HepG2 (cell line): ENCODE measurements at regions of chr5 and their contacts with region 1.

Region 1: GRCh38 chr5:102971697-102972293 is 148.1 kb downstream of the GIN1 start:
- DNase-seq: peak; percentile 1
- ATAC-seq: peak; percentile 65
- H3K4me3 ChIP-seq: no peak overlapping the region
- H3K27ac ChIP-seq: no peak overlapping the region
- H3K4me1 ChIP-seq: no peaks in the 10 kb centered on the region
- H3K27me3 ChIP-seq: no peaks in the 10 kb centered on the region
- CTCF ChIP-seq: peak; percentile 41; the same call in 1 of the 2 replicates
- EP300 ChIP-seq: no peak
- POLR2A ChIP-seq: no peak
- RAD21 ChIP-seq: no peak

Region 2: GRCh38 chr5:102654559-102655349 is 317.0 kb before region 1 on chr5:
- CTCF ChIA-PET with region 1: no interaction called
- POLR2A ChIA-PET with region 1: no interaction called
- in situ Hi-C with region 1: no loop called
- intact Hi-C with region 1: no loop called
- DNase-seq: no peak
- ATAC-seq: no peak
- H3K4me3 ChIP-seq: no peak overlapping the region
- H3K27ac ChIP-seq: no peak overlapping the region
- H3K4me1 ChIP-seq: no peaks in the 10 kb centered on the region
- H3K27me3 ChIP-seq: no peaks in the 10 kb centered on the region
- CTCF ChIP-seq: no peak
- EP300 ChIP-seq: no peak
- POLR2A ChIP-seq: no peak
- RAD21 ChIP-seq: no peak

Region 3: GRCh38 chr5:102681407-102681983 is 290.3 kb before region 1 on chr5:
- CTCF ChIA-PET with region 1: no interaction called
- POLR2A ChIA-PET with region 1: no interaction called
- in situ Hi-C with region 1: no loop called
- intact Hi-C with region 1: loop called (anchors 1 kb)
- DNase-seq: peak; percentile 46
- ATAC-seq: peak; percentile 87
- H3K4me3 ChIP-seq: no peak overlapping the region
- H3K27ac ChIP-seq: no peak overlapping the region
- H3K4me1 ChIP-seq: no peaks in the 10 kb centered on the region; the same call in 1 of the 2 replicates
- H3K27me3 ChIP-seq: no peaks in the 10 kb centered on the region
- CTCF ChIP-seq: peak; percentile 84
- EP300 ChIP-seq: no peak
- POLR2A ChIP-seq: no peak
- RAD21 ChIP-seq: 0 out of 2 replicates have a peak, but pooled peaks have one; percentile 26

Region 4: GRCh38 chr5:102991802-102992201 is 20.0 kb after region 1 on chr5:
- CTCF ChIA-PET with region 1: no interaction called
- POLR2A ChIA-PET with region 1: no interaction called
- in situ Hi-C with region 1: no loop called
- intact Hi-C with region 1: no loop called
- DNase-seq: no peak
- ATAC-seq: no peak
- H3K4me3 ChIP-seq: no peak overlapping the region
- H3K27ac ChIP-seq: no peak overlapping the region
- H3K4me1 ChIP-seq: no peaks in the 10 kb centered on the region
- H3K27me3 ChIP-seq: no peaks in the 10 kb centered on the region
- CTCF ChIP-seq: no peak
- EP300 ChIP-seq: no peak
- POLR2A ChIP-seq: no peak
- RAD21 ChIP-seq: no peak